HepG2 (cell line): ENCODE measurements at regions of chr10 and their contacts with region 1.

Region 1: GRCh38 chr10:13160934-13161856 is at the start of gene MCM10:
- DNase-seq: peak; percentile 98
- ATAC-seq: peak; percentile 99
- H3K4me3 ChIP-seq: peak within 1 kb of the TSS; percentile 67 to 87 (median 79)
- H3K27ac ChIP-seq: peak within 1 kb of the TSS; percentile 34
- H3K4me1 ChIP-seq: peaks cover 26% of the 10 kb centered on the region
- H3K27me3 ChIP-seq: no peaks in the 10 kb centered on the region
- CTCF ChIP-seq: peak; percentile 95
- EP300 ChIP-seq: peak in 1 of 2 experiments; percentile 34; a peak in 2 of 4 replicates
- POLR2A ChIP-seq: peak in 1 of 2 experiments; percentile 48; a peak in 2 of 4 replicates
- RAD21 ChIP-seq: peak; percentile 80
- total RNA-seq, gene MCM10: 31.3 and 41.8 TPM in 2 replicates

Region 2: GRCh38 chr10:13099666-13100348 is 61.4 kb before region 1 on chr10 and contains the start of gene OPTN:
- CTCF ChIA-PET with region 1: interaction called, 10 read pairs
- POLR2A ChIA-PET with region 1: no interaction called
- in situ Hi-C with region 1: no loop called
- intact Hi-C with region 1: loop called (anchors 5 kb)
- DNase-seq: peak; percentile 72
- ATAC-seq: peak; percentile 78
- H3K4me3 ChIP-seq: peak within 1 kb of the TSS; percentile 81 to 86 (median 84)
- H3K27ac ChIP-seq: peak within 1 kb of the TSS; percentile 58
- H3K4me1 ChIP-seq: peaks cover 36% of the 10 kb centered on the region
- H3K27me3 ChIP-seq: no peaks in the 10 kb centered on the region; a peak in 2 of 5 replicates
- CTCF ChIP-seq: peak; percentile 87
- EP300 ChIP-seq: no peak
- POLR2A ChIP-seq: 0 out of 4 replicates have a peak, but pooled peaks of 1 of the 2 experiments have one; percentile 33
- RAD21 ChIP-seq: peak; percentile 44; the same call in 1 of the 2 replicates
- total RNA-seq, gene OPTN: 13.4 and 16.9 TPM in 2 replicates

Region 3: GRCh38 chr10:13348216-13349017 is 187.2 kb after region 1 on chr10 and contains the start of gene SEPHS1:
- CTCF ChIA-PET with region 1: no interaction called
- POLR2A ChIA-PET with region 1: no interaction called
- in situ Hi-C with region 1: no loop called
- intact Hi-C with region 1: loop called (anchors 2 kb)
- DNase-seq: peak; percentile 75
- ATAC-seq: peak; percentile 76
- H3K4me3 ChIP-seq: peak within 1 kb of the TSS; percentile 79 to 96 (median 86)
- H3K27ac ChIP-seq: peak within 1 kb of the TSS; percentile 92
- H3K4me1 ChIP-seq: peaks cover 49% of the 10 kb centered on the region
- H3K27me3 ChIP-seq: no peaks in the 10 kb centered on the region; a peak in 1 of 5 replicates
- CTCF ChIP-seq: no peak; the same call in 1 of the 2 replicates
- EP300 ChIP-seq: no peak
- POLR2A ChIP-seq: peak; percentile 57 to 62; a peak in 3 of 4 replicates
- RAD21 ChIP-seq: no peak
- total RNA-seq, gene SEPHS1: 61.5 and 76.0 TPM in 2 replicates